ENCODE measurements at regions of chr7 and their contacts with region 1.

Region 1: DNA sequence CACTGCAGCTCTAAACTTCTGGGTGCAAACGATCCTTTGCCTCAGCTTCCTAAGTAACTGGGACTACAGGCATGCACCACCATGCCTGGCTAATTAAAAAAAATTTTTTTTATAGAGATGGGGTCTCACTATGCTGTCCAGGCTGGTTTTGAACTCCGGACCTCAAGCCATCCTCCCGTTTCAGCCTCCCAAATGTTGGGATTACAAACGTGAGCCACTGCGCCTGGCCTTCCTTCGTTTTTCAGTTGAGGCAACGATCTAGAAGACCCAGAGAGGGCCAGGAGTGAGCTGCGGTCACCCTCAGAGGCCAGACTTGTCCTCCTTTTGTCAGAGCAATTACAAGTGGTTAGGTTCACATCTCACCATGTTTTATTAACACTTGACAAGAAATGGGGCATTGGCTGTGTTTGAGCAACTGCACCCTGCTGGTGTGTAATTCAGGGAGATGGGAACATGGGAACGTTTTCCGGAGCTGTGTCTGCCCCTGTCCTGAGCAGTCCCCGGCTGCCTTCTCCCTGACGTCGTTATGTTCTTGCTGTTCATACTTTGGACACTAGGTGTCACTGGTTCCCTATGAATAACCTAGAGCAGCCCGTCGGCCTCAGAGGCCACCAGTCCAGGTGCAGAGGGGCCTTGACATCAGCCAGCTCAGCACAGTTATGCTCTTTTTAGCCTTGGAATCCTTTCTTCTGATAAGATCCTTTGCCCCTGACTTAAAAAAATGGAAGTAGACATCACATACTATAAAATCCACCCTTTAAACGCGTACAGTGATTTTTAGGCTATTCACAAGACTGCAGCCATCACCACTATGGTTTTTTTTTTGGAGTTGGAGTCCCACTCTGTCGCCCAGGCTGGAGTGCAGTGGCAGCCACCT is 375.0 kb downstream of the TYW1 start:
- DNase-seq: peak; percentile 75
- H3K4me3 ChIP-seq: no peak overlapping the region
- H3K27ac ChIP-seq: no peak overlapping the region
- H3K4me1 ChIP-seq: no peaks in the 10 kb centered on the region
- CTCF ChIP-seq: peak; percentile 88

Region 2: DNA sequence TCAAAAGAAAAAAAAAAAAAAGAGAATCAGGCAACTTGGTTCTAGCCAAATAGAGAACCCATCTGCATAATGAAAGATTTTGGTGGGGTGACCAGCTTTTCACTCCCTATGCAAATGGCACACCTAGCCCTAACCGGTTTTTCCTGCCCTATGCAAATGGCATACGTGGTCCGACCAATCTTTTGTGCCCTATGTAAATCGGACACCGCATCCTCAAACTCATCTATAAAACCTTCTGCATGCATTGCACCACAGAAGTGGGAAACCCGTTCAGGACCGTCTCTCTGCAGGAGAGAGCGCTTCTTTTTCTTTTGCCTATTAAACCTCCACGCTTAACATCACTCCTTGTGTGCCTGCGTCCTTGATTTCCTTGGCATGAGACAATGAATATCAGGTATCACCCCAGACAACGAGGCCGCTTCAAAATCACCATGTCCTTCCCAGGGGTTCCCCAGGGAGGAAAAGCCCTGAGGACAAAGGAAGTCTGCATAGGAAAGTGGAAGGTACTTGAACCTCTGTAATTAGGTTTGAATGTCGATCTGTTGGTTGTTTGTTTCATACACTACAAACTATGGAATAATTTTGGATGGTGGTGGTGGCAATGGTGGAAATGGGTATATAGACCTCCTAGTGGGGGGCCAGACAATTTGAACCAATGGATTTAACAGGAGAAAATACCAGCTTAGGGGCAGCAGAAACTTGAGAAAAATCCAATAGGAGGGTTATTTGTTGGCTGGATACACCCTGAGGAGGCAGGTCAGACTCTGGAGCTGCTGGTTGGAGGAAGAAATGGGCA is 21.2 kb after region 1 on chr7:
- CTCF ChIA-PET with region 1: no interaction called
- POLR2A ChIA-PET with region 1: no interaction called
- intact Hi-C with region 1: no loop called
- DNase-seq: no peak
- H3K4me3 ChIP-seq: no peak overlapping the region
- H3K27ac ChIP-seq: no peak overlapping the region
- H3K4me1 ChIP-seq: no peaks in the 10 kb centered on the region
- CTCF ChIP-seq: no peak

Region 3: GRCh38 chr7:67484244-67484751 is 112.6 kb after region 1 on chr7:
- CTCF ChIA-PET with region 1: no interaction called
- POLR2A ChIA-PET with region 1: no interaction called
- intact Hi-C with region 1: loop called (anchors 10 kb)
- DNase-seq: peak; percentile 62
- H3K4me3 ChIP-seq: no peak overlapping the region
- H3K27ac ChIP-seq: no peak overlapping the region
- H3K4me1 ChIP-seq: no peaks in the 10 kb centered on the region
- CTCF ChIP-seq: peak; percentile 76

Measured in OCI-LY7 (cell line).